GM10248 (cell line): ENCODE measurements at regions of chr6 and their contacts with region 1.

Region 1: DNA sequence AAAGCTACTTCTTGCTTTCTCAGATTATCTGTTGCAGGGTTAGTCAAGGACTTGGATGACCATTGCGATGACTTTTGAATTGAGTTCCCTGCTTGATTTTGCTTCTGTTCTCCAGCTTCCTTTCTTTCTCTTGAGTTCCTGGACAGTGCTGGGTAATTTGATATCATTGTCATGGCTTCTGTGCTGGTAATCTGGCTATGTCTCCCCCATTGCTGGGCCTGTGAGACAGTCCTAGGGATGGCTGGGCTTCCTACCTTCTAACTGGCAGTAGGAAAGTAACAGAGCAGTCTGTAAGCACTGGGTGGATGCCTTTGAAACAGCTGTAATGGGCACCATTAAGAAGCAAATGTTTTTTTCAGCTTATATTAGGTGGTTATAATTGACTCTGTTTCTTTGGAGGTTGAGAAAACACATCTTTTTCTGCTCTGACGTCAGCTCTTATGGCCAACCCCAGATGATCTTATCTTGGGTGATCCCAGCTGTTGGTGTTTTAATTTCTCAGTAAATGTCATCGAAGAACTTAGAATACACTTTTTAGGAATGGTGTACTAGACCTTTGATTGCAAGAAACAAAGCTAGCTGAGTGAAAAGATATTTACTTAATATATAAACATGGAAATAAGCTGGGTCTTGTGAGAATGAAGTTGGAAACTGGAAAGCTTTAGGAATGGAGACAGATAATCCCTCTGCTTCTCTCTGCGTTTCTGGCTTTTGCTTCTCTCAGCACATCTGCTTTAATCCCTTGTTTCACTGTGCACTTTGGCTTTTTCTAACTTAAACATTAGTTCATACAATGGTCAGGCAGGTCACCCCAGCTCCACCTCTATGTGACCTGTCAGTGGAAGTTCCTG is 195.0 kb upstream of the MAN1A1 start:
- DNase-seq: no peak
- CTCF ChIP-seq: no peak

Region 2: DNA sequence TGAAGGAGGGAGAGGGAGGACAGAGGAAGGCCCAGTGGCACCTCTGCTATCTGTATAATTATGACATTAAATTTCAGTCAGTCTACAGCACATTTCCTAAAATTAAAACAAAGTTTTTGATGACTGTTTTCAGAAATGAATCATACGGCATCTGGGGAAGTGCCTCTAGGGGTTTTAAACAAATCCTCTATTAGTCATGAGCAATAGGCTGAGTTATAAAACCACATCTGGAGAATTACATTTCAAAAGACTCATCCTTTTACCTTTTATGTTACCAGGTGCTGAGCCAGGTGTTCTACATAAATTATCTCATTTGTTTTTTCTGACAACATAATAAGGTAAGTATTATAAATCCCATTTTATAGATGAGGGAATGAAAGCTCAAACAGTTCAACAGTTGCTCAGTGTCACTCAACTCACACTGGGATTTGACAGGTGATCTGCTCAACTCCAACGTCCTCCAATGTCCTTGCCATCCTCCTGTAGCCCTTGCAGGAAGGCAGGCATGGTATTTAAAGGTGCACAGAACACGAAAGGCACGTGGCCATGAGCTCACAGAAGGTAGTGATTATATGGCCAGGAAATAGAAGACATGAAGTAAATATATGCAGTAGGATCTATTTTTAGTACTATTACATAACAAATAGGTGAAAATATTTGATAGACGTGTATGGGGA is 10.8 kb before region 1 on chr6:
- CTCF ChIA-PET with region 1: interaction called, 10 read pairs
- POLR2A ChIA-PET with region 1: no interaction called
- DNase-seq: peak; percentile 21
- CTCF ChIP-seq: no peak